Heart right ventricle (tissue), 16 donors: ENCODE measurements at regions of chr22 and their contacts with region 1.

Region 1: GRCh38 chr22:27804470-27805297 is 3.1 kb upstream of the MN1 start:
- DNase-seq: peak; percentile 70 to 80
- ATAC-seq: peak; percentile 23 to 68 (median 61)
- H3K4me3 ChIP-seq: no peak overlapping the region
- H3K27ac ChIP-seq: no peak overlapping the region
- H3K4me1 ChIP-seq: peaks cover 0 to 34% (median 22%) of the 10 kb centered on the region in 9 donors
- H3K27me3 ChIP-seq: peaks cover 0 to 49% (median 0%) of the 10 kb centered on the region in 7 donors
- CTCF ChIP-seq: peak; percentile 67 to 85 (median 75)

Region 2: GRCh38 chr22:26672590-26673468 is 1131.9 kb before region 1 on chr22:
- intact Hi-C with region 1: loop called in 3 of 10 experiments (anchors 10 kb)
- DNase-seq: peak; percentile 88 to 93
- ATAC-seq: peak; percentile 92 to 96 (median 94)
- H3K4me3 ChIP-seq: peak overlapping the region; percentile 42 to 95 (median 84)
- H3K27ac ChIP-seq: peak overlapping the region; percentile 87 to 98 (median 98)
- H3K4me1 ChIP-seq: peaks cover 8 to 49% (median 29%) of the 10 kb centered on the region in 9 donors
- H3K27me3 ChIP-seq: no peaks in the 10 kb centered on the region
- CTCF ChIP-seq: peak; percentile 10 to 82 (median 69)

Region 3: DNA sequence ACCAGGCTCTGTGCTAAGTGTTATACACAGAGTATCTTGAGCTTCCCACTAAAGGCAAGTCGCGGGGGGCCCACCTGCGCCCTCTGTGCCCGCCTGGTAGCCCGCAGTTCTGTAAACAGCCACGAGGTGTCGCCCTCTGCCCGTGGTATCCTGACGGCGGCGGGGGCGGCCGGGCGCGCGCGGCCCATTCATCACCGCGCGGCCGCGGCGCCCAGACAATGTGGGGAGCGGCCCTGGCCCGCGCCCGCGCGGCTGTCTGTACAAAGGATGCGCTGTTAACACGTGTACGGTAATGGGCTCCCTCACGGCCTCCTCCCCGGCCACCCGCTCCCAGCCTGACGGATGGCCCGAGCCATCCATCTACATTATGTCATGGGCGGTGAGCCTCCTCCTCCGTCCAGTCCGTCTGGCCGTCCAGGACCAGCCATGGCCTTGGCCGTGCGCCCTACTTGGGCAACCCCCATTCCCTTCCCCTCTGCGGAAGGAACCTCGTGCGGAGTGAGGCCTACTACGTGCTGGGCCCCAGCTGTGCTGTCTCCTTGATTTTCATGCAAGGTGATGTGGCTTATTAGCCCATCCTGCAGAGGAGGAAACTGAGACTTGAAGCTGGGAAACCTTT is 1047.9 kb before region 1 on chr22:
- intact Hi-C with region 1: loop called in 8 of 10 experiments (anchors 5 to 10 kb)
- DNase-seq: peak; percentile 48 to 70
- ATAC-seq: peak; percentile 78 to 92 (median 86)
- H3K4me3 ChIP-seq: peak overlapping the region in 8 of 10 donors; percentile 12 to 38 (median 35)
- H3K27ac ChIP-seq: no peak overlapping the region
- H3K4me1 ChIP-seq: no peaks in the 10 kb centered on the region
- H3K27me3 ChIP-seq: no peaks in the 10 kb centered on the region
- CTCF ChIP-seq: peak; percentile 87 to 95 (median 91)

Region 4: DNA sequence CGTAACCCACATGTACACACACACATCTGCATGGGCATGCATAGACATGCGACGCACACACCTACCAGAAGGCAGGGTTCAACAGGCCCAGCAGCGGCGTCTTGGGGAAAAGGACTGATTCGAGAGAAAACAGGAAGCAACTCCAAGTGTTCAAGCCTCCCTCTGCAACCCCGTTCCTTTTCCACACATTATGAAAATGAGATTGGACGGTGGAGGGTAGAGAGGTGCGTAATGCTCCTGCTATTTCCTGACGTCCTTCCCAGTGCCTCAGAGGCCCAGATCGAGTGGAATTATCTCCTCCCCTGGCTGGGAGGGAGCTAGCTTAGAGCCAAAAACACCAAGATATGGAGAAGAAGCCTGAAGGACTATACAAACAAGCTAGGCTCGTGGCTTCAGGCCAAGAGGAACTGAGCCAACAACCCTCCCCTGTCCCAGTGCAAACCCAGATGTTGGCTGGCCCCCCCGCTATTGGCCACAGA is 292.4 kb before region 1 on chr22:
- intact Hi-C with region 1: loop called in 1 of 10 experiments (anchors 10 kb)
- DNase-seq: peak; percentile 84 to 90
- ATAC-seq: peak; percentile 84 to 90 (median 87)
- H3K4me3 ChIP-seq: no peak overlapping the region
- H3K27ac ChIP-seq: peak overlapping the region in 9 of 10 donors; percentile 9 to 81 (median 54)
- H3K4me1 ChIP-seq: peaks cover 0 to 24% (median 10%) of the 10 kb centered on the region in 9 donors
- H3K27me3 ChIP-seq: no peaks in the 10 kb centered on the region
- CTCF ChIP-seq: no peak

Region 5: GRCh38 chr22:27617214-27617881 is 187.3 kb before region 1 on chr22:
- intact Hi-C with region 1: loop called in 1 of 10 experiments (anchors 10 kb)
- DNase-seq: no peak
- ATAC-seq: no peak
- H3K4me3 ChIP-seq: no peak overlapping the region
- H3K27ac ChIP-seq: no peak overlapping the region
- H3K4me1 ChIP-seq: peaks cover 0 to 8% (median 6%) of the 10 kb centered on the region in 9 donors
- H3K27me3 ChIP-seq: peaks cover 4 to 34% (median 29%) of the 10 kb centered on the region in 7 donors
- CTCF ChIP-seq: no peak

Region 6: GRCh38 chr22:27718186-27719032 is 86.3 kb before region 1 on chr22:
- intact Hi-C with region 1: loop called in 3 of 10 experiments (anchors 5 to 10 kb)
- DNase-seq: peak; percentile 66 to 79
- ATAC-seq: peak; percentile 85 to 97 (median 94)
- H3K4me3 ChIP-seq: peak overlapping the region in 2 of 10 donors; percentile 1 to 6
- H3K27ac ChIP-seq: peak overlapping the region; percentile 2 to 84 (median 60)
- H3K4me1 ChIP-seq: peaks cover 3 to 30% (median 18%) of the 10 kb centered on the region in 9 donors
- H3K27me3 ChIP-seq: peaks cover 0 to 11% (median 0%) of the 10 kb centered on the region in 7 donors
- CTCF ChIP-seq: no peak

Region 7: GRCh38 chr22:27772081-27772987 is 32.4 kb before region 1 on chr22:
- intact Hi-C with region 1: no loop called
- DNase-seq: no peak
- ATAC-seq: no peak
- H3K4me3 ChIP-seq: no peak overlapping the region
- H3K27ac ChIP-seq: no peak overlapping the region
- H3K4me1 ChIP-seq: peaks cover 0 to 24% (median 20%) of the 10 kb centered on the region in 9 donors
- H3K27me3 ChIP-seq: peaks cover 0 to 8% (median 0%) of the 10 kb centered on the region in 7 donors
- CTCF ChIP-seq: no peak

Region 8: GRCh38 chr22:27880778-27881394 is 76.2 kb after region 1 on chr22:
- intact Hi-C with region 1: loop called in 1 of 10 experiments (anchors 10 kb)
- DNase-seq: peak in 1 of 2 donors; percentile 68
- ATAC-seq: peak; percentile 58 to 89 (median 80)
- H3K4me3 ChIP-seq: no peak overlapping the region
- H3K27ac ChIP-seq: peak overlapping the region in 7 of 10 donors; percentile 10 to 46 (median 33)
- H3K4me1 ChIP-seq: peaks cover 3 to 77% (median 67%) of the 10 kb centered on the region in 9 donors
- H3K27me3 ChIP-seq: no peaks in the 10 kb centered on the region
- CTCF ChIP-seq: peak; percentile 76 to 87 (median 83)